Activated T-helper 1 cell treated with anti-CD3 and anti-CD28 coated beads, Interleukin-12 subunit alpha, Interleukin-12 subunit beta, Interleukin-2, Interleukin-4 antibody, amounts not matched to agents 30 ng/mL and 10 ng/mL and 1 ng/mL, durations not matched to agents 14 hours and 24 hours and 36 hours (primary cell): ENCODE measurements at regions of chr10 and their contacts with region 1.

Region 1: DNA sequence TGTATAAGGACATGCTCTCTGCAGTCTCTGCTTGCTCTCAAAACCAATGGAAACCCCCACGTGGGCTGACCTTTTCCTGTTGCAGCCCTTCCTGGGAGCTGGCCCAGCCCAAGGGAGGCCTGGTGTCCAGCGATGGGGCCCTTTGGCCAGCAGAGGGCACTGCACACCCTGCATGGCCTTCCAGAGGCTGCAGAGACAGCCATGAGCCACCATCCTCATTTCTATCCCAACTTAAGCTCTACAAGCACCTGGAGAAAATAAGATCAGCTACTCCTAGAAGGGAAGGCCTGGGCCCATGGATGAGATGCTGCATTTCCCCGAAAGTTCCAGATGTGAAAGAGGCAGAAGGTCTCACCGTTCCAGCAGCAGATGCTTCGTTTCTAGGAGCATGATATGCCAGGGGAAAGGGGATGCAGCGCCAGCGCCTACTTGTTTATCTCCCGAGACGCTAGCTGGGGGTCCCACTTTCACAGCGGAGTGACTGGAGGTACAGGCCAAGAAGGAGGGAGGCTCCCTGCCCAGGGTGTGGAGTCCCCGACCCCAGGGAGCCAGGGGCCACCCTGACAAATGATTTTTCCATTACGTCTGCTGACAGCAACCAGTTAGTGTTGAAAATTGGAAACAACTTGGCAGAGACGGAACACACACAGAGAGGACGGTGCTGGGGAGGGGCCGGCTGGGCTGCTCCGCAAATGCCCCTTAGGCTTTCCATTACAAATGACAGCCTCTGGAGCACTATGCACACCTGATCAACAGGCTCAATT is 106.4 kb downstream of the ZRANB1 start:
- DNase-seq: peak; percentile 25
- H3K4me3 Mint-ChIP-seq: no peak overlapping the region
- H3K27ac Mint-ChIP-seq: no peak overlapping the region
- H3K4me1 Mint-ChIP-seq: no peaks in the 10 kb centered on the region
- H3K27me3 Mint-ChIP-seq: peaks cover 8% of the 10 kb centered on the region

Region 2: DNA sequence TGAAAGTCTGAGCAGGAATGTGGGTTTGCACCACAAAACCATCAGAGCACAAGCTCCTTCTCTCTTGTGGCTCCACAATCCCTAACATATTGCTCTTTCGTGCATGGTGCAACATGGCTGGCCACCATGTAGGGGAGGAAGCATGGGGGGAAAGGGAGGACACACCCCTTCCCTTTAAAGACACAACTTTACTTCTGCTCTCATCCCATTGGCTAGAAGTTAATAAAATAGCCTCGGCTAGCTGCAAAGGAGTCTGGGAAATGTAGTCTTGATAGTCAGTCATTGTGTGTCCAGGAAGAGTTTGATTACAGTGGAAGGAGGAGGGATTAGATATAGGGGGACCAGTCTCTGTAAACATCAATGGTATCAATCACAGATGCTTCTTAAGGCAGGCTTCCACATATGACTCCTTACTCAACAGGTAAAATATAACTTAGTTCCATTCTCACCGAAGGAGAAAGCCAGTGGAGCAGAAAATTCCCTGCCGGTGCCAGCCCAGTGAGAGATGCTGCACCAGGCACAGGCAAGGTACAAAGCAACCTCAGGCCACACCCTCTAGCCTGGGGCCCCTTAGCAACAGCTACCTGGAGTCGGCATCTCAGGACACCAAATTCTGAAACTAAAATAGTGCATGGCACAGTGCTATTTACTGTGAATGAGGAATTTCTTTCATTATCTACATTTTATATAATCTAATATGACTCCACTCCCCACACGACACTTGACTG is 236.8 kb after region 1 on chr10:
- intact Hi-C with region 1: loop called (anchors 5 kb)
- DNase-seq: no peak
- H3K4me3 Mint-ChIP-seq: no peak overlapping the region
- H3K27ac Mint-ChIP-seq: no peak overlapping the region
- H3K4me1 Mint-ChIP-seq: no peaks in the 10 kb centered on the region
- H3K27me3 Mint-ChIP-seq: no peaks in the 10 kb centered on the region